Posterior cingulate gyrus (tissue), 11 donors: ENCODE measurements at regions of chr20 and their contacts with region 1.

Region 1: DNA sequence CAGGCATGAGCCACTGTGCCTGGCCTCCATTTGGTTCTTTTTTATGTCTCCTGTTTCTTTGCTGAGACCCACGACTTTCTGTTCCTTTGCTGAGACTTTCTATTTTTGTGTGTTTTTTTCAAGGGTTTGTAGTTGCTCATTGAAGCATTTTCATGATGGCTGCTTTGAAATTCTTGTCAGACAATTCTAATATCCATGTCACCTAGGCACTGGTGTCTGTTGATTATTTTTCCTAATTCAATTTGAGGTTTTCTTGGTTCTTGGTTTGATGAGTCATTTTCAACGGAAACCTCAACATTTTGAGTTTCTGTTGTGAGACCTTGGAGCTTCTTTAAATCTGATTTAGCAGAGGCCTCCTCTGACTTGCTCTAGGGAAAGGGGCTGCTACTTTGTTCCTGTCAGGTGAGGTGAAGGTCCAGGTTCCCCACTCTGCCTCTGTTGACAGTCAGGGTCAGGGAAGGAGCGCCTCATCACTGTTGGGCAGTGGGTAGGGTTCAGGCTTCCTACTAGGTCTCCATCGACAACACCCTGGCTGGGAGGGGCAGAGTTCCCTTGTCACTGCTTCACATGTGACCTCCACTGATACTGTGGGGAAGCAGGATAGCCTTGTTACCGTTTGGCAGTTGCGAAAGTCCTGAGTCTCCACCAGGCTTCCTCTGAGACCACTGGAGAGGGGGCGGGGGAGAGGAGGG is 67.2 kb upstream of the RNF24 start:
- DNase-seq: peak in 1 of 10 donors; percentile 70

Region 2: DNA sequence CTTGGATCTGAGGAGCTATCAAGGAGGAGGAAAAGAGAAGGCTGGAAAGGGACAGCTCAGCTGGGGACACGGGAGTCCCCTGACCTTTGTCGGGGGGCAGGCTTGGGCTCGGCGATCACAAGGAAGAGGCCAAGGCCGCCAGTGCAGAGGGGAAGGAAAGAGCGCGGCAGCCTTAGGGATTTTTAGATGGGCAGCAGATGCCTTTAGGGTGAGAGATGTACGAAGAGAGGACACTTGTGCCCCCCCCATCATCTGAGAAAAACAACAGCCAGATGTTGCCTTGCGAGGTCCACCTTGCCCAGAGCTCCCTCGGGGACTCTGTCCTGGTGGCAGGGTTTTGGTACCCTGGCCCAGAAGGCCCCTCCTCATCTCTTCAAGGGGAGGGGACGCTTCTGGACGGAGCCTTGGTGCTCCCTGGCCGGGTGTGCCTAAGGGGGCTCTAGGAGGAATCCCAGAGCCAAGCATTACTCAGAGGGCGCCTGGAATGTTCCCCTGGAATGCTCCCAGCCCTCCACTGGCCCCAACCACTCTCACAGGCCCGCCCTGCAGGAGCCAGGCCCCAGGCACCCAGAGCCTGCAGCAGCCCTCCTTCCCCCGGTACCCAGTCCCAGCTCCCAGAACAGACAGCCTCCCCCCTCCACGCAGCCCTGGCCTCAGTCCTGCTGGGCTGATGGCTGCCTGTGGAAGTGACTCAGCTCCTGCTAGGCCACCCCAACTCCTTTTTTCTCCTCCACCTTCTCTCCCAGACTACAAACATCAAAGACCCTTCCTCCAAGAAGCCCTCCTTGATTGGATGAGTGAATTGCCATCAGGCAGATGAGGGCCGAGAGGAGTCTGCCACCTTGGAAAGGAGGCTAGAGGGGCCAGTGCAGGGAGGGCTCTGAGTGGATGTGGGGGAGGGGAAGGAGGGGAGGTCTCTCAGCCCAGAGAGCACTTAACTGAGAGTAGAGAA is 402.5 kb before region 1 on chr20:
- intact Hi-C with region 1: loop called (anchors 10 kb)
- DNase-seq: peak in 1 of 10 donors; percentile 72

Region 3: GRCh38 chr20:3786665-3787323 is 295.8 kb before region 1 on chr20 and contains the start of gene CENPB:
- intact Hi-C with region 1: loop called (anchors 10 kb)
- DNase-seq: peak; percentile 83 to 98 (median 86)

Region 4: GRCh38 chr20:3888622-3889488 is 193.7 kb before region 1 on chr20 and contains the start of gene PANK2:
- intact Hi-C with region 1: loop called (anchors 1 kb)
- DNase-seq: peak; percentile 98 to 100 (median 99)

Region 5: DNA sequence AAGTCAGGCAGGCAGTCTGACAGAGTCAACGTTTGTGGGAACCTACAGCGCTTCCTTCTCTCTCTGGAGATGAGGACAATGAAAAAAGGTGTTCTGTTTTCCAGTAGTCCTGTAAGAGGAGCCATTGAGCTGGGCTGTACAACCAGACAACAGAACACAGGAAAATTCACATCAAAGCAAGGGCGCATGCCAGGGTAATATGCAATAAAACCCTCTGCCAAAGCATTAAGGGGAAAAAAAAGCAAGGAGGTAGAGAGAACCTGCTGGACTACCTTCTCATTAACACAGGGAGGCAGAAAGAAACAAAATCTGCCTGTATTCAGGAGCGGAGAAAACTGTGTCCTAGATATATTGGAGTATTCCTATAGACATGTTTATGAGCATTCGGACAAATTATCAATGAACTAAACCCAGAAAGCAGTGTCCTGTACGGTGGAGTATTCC is 68.5 kb before region 1 on chr20:
- intact Hi-C with region 1: loop called (anchors 1 kb)
- DNase-seq: peak in 1 of 10 donors; percentile 30